CD8-positive, alpha-beta memory T cell (primary cell): ENCODE measurements at regions of chr17 and their contacts with region 1.

Region 1: DNA sequence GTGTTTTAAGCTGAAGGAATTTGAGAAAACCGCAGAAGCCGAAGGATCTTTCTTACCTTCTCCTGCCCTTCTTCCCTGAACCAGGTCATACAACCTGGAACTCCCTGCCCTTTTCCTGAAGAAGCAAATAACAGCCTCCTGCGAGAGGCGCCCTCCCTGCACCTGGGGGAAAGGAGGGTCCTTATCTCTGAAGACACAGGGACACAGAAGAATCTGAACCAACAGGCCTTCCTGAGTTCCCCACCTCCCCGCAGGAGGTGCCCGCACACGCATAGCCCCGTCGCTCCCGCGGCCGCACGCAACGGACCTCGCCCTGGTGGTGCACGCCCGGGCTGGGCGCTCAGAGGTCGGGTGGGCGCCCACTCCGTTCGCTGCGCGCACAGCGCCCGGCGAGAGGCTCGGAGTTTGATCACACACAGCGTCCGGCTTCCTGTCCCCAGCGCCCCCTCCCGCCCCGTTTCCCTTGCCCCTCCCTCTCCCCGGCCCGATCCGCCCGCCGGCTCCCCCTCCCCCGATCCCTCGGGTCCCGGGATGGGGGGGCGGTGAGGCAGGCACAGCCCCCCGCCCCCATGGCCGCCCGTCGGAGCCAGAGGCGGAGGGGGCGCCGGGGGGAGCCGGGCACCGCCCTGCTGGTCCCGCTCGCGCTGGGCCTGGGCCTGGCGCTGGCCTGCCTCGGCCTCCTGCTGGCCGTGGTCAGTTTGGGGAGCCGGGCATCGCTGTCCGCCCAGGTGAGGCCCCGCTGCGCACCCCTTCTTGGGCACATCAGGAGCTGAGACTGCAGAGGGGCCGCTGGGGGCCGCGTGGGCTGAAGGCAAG is at the start of gene TNFSF12:
- DNase-seq: peak; percentile 43 to 75 (median 45)
- H3K4me3 ChIP-seq: peak within 1 kb of the TSS; percentile 90
- H3K4me3 Mint-ChIP-seq: peak within 1 kb of the TSS; percentile 84 to 94 (median 89)
- H3K27ac ChIP-seq: peak within 1 kb of the TSS; percentile 45
- H3K27ac Mint-ChIP-seq: peak within 1 kb of the TSS; percentile 76 to 97 (median 93)
- H3K4me1 ChIP-seq: peaks cover 45% of the 10 kb centered on the region
- H3K4me1 Mint-ChIP-seq: peaks cover 38 to 51% (median 46%) of the 10 kb centered on the region in 3 donors
- H3K27me3 ChIP-seq: no peaks in the 10 kb centered on the region
- H3K27me3 Mint-ChIP-seq: peaks cover 0 to 4% of the 10 kb centered on the region in 2 donors
- total RNA-seq, gene TNFSF12: 18.6 to 22.5 TPM

Region 2: GRCh38 chr17:7344399-7344798 is 204.4 kb before region 1 on chr17:
- CTCF ChIA-PET with region 1: no interaction called
- POLR2A ChIA-PET with region 1: interaction called, 10 read pairs
- DNase-seq: no peak
- H3K4me3 ChIP-seq: no peak overlapping the region
- H3K4me3 Mint-ChIP-seq: no peak overlapping the region
- H3K27ac ChIP-seq: no peak overlapping the region
- H3K27ac Mint-ChIP-seq: peak overlapping the region in 1 of 8 donors; percentile 78
- H3K4me1 ChIP-seq: peaks cover 8% of the 10 kb centered on the region
- H3K4me1 Mint-ChIP-seq: peaks cover 16 to 37% (median 17%) of the 10 kb centered on the region in 3 donors
- H3K27me3 ChIP-seq: no peaks in the 10 kb centered on the region
- H3K27me3 Mint-ChIP-seq: no peaks in the 10 kb centered on the region

Region 3: DNA sequence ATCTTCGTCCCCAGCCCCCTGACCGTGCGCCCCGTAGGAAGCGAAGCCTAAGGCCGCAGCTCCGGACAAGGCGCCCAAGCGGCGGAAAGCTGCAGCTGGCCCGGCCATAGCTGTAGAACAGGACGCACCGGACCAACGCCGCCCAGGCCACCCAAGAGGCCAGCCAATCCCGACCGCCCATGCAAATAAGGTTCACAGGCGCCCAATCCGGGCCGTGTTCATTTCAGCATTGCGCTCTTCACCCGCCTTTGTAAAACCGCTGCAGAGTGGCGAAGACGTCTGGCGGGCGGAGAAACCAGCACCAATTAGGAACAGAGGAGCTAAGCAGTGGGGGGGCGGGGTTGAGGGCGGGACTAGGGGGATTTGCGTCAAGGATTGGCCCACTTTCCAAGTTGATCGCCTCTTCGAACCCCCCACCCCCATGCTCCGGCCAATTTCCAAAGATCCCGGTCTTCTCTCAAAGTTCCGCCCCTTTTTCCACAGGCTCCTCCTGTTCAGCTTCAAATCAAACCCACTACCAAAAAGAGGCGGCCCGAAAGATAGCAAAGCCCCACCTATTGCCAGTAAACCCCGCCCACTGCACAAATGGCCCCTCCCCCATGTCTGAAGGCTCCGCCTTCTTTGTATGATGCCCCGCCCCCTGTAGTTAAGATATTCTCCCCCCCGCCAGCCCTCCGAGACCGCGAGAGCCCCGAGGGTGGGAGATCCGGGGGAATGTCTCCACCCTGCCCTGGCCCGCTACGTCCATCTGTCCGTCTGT is 144.6 kb before region 1 on chr17 and contains the start of gene TMEM256:
- CTCF ChIA-PET with region 1: no interaction called
- POLR2A ChIA-PET with region 1: interaction called, 10 read pairs
- DNase-seq: peak; percentile 91 to 97 (median 95)
- H3K4me3 ChIP-seq: peak within 1 kb of the TSS; percentile 90
- H3K4me3 Mint-ChIP-seq: peak within 1 kb of the TSS; percentile 90 to 99 (median 97)
- H3K27ac ChIP-seq: peak within 1 kb of the TSS; percentile 67
- H3K27ac Mint-ChIP-seq: peak within 1 kb of the TSS; percentile 83 to 99 (median 96)
- H3K4me1 ChIP-seq: peaks cover 16% of the 10 kb centered on the region
- H3K4me1 Mint-ChIP-seq: peaks cover 17 to 36% (median 21%) of the 10 kb centered on the region in 3 donors
- H3K27me3 ChIP-seq: no peaks in the 10 kb centered on the region
- H3K27me3 Mint-ChIP-seq: peaks cover 0 to 2% of the 10 kb centered on the region in 2 donors
- total RNA-seq, gene TMEM256: 45.4 to 51.4 TPM

Region 4: DNA sequence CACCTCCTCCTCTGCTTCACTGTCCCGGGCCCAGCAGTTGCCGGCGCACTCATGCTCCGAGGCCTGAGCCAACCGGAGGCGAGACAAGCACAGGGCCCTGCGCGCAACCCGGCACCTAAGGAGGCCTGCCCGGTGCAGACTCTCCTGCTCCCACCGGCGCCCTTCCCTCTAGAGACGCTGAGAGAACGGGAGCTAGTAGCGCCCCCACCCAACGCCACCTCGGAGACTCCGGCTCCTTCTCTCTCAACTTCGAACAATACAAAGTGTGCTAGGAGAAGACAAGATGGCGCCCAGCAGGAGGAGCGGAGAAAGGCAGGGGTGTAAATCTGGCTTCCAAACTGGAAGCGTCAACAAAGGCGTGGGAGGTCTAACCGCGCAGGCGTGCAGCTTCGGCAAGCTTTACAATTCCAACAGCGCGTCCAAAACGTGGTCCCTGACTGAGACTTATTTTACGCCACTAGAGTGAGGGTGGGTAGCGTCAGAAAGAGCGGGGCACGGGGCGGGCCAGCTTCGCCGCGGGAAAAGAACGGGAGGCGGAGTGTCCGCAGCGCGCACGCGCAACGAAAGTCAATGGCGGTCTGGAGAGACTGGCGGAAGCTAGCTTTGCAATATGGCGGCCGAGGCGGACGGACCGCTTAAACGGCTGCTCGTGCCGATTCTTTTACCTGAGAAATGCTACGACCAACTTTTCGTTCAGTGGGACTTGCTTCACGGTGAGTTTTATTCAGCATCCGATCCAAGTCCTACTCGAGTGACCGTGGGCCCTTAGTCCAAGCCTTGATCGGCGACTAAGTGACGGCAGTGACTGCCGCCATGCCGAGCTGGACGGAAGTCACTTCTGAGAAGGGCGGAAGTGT is 34.7 kb after region 1 on chr17 and contains the start of gene MPDU1:
- CTCF ChIA-PET with region 1: no interaction called
- POLR2A ChIA-PET with region 1: no interaction called
- DNase-seq: peak; percentile 90 to 97 (median 96)
- H3K4me3 ChIP-seq: peak within 1 kb of the TSS; percentile 98
- H3K4me3 Mint-ChIP-seq: peak within 1 kb of the TSS; percentile 99 to 100 (median 99)
- H3K27ac ChIP-seq: peak within 1 kb of the TSS; percentile 98
- H3K27ac Mint-ChIP-seq: peak within 1 kb of the TSS; percentile 99 to 100 (median 100)
- H3K4me1 ChIP-seq: peaks cover 40% of the 10 kb centered on the region
- H3K4me1 Mint-ChIP-seq: peaks cover 50 to 60% (median 52%) of the 10 kb centered on the region in 3 donors
- H3K27me3 ChIP-seq: no peaks in the 10 kb centered on the region
- H3K27me3 Mint-ChIP-seq: peaks cover 0 to 4% of the 10 kb centered on the region in 2 donors
- total RNA-seq, gene MPDU1: 115 to 124 TPM

Region 5: GRCh38 chr17:7627250-7628121 is 78.7 kb after region 1 on chr17 and contains the start of gene SAT2:
- CTCF ChIA-PET with region 1: no interaction called
- POLR2A ChIA-PET with region 1: interaction called, 10 read pairs
- DNase-seq: peak; percentile 80 to 93 (median 82)
- H3K4me3 ChIP-seq: peak within 1 kb of the TSS; percentile 90
- H3K4me3 Mint-ChIP-seq: peak within 1 kb of the TSS; percentile 90 to 95 (median 93)
- H3K27ac ChIP-seq: peak within 1 kb of the TSS; percentile 69
- H3K27ac Mint-ChIP-seq: peak within 1 kb of the TSS; percentile 70 to 97 (median 91)
- H3K4me1 ChIP-seq: peaks cover 10% of the 10 kb centered on the region
- H3K4me1 Mint-ChIP-seq: peaks cover 12 to 20% (median 13%) of the 10 kb centered on the region in 3 donors
- H3K27me3 ChIP-seq: no peaks in the 10 kb centered on the region
- H3K27me3 Mint-ChIP-seq: no peaks in the 10 kb centered on the region
- total RNA-seq, gene SAT2: 18.4 to 21.6 TPM

Region 6: DNA sequence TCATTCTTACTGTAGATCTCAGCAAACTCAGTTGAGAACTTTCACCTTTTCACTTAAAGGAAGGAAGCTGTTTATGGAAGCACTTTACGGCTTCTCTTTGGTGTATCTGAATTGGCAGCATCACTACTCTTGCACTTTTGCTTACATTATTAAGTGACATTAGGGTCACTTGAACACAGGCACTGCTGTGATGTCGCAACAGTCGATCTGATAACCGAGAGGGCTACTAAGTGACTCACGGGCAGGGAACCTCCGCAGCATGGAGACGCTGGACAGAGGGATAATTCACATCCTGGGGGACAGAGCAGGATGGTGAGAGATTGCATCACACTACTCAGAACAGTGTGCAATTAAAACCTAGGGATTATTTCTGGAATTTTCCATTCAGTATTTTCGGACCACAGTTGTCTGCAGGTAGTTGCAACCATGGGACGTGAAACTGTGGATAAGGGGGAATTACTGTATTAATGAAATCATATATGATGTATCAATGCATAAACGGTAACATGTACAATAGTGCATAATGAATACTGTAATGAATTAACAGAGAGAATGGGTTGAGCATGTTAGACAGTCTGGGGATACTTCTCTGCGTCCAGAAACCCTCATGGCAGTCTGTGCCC is 225.4 kb after region 1 on chr17:
- CTCF ChIA-PET with region 1: no interaction called
- POLR2A ChIA-PET with region 1: no interaction called
- DNase-seq: no peak
- H3K4me3 ChIP-seq: no peak overlapping the region
- H3K4me3 Mint-ChIP-seq: no peak overlapping the region
- H3K27ac ChIP-seq: no peak overlapping the region
- H3K27ac Mint-ChIP-seq: no peak overlapping the region
- H3K4me1 ChIP-seq: no peaks in the 10 kb centered on the region
- H3K4me1 Mint-ChIP-seq: no peaks in the 10 kb centered on the region
- H3K27me3 ChIP-seq: no peaks in the 10 kb centered on the region
- H3K27me3 Mint-ChIP-seq: peaks cover 33 to 68% of the 10 kb centered on the region in 2 donors